Heart right ventricle (tissue), 16 donors: ENCODE measurements at regions of chr4 and their contacts with region 1.

Region 1: GRCh38 chr4:158778156-158778711 is 9.4 kb downstream of the FNIP2 start:
- DNase-seq: no peak
- ATAC-seq: peak in 1 of 8 donors; percentile 26
- H3K4me3 ChIP-seq: no peak overlapping the region
- H3K27ac ChIP-seq: peak overlapping the region in 4 of 10 donors; percentile 7 to 23 (median 14)
- H3K4me1 ChIP-seq: peaks cover 10 to 90% (median 74%) of the 10 kb centered on the region in 9 donors
- H3K27me3 ChIP-seq: no peaks in the 10 kb centered on the region
- CTCF ChIP-seq: no peak

Region 2: DNA sequence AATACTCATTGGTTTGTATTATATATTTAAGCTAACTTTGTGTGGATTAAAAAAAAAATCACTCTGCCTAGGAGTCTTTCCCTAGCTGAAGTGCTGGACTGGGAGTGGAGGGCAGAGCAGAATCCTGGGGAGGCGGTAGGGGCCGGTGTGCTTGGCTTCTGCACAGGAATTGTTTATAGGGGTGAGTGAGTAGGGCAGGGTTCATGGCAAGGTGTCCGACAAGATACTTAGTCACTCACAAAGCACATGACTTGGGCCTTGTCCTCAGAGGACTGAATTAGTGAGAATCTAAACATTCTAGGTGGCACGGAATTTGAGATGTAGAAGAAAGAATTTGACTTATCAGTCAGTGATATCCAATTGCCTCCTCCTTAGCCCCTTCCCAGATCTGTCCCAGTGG is 22.8 kb after region 1 on chr4:
- intact Hi-C with region 1: loop called in 1 of 10 experiments (anchors 1 kb)
- DNase-seq: no peak
- ATAC-seq: peak in 6 of 8 donors; percentile 60 to 76 (median 66)
- H3K4me3 ChIP-seq: no peak overlapping the region
- H3K27ac ChIP-seq: peak overlapping the region in 8 of 10 donors; percentile 10 to 68 (median 44)
- H3K4me1 ChIP-seq: peaks cover 3 to 85% (median 50%) of the 10 kb centered on the region in 9 donors
- H3K27me3 ChIP-seq: no peaks in the 10 kb centered on the region
- CTCF ChIP-seq: no peak

Region 3: GRCh38 chr4:158809611-158810486 is 31.6 kb after region 1 on chr4:
- intact Hi-C with region 1: loop called in 4 of 10 experiments (anchors 5 kb)
- DNase-seq: peak in 1 of 2 donors; percentile 43
- ATAC-seq: peak; percentile 42 to 73 (median 62)
- H3K4me3 ChIP-seq: peak overlapping the region in 6 of 10 donors; percentile 1 to 32 (median 6)
- H3K27ac ChIP-seq: peak overlapping the region; percentile 55 to 89 (median 80)
- H3K4me1 ChIP-seq: peaks cover 15 to 97% (median 81%) of the 10 kb centered on the region in 9 donors
- H3K27me3 ChIP-seq: no peaks in the 10 kb centered on the region
- CTCF ChIP-seq: no peak

Region 4: GRCh38 chr4:158817562-158818296 is 39.5 kb after region 1 on chr4:
- intact Hi-C with region 1: loop called in 5 of 10 experiments (anchors 5 to 10 kb)
- DNase-seq: no peak
- ATAC-seq: peak in 4 of 8 donors; percentile 5 to 19 (median 15)
- H3K4me3 ChIP-seq: no peak overlapping the region
- H3K27ac ChIP-seq: peak overlapping the region in 5 of 10 donors; percentile 0 to 64 (median 48)
- H3K4me1 ChIP-seq: peaks cover 21 to 85% (median 69%) of the 10 kb centered on the region in 9 donors
- H3K27me3 ChIP-seq: no peaks in the 10 kb centered on the region
- CTCF ChIP-seq: no peak